Dorsolateral prefrontal cortex (tissue), 120 donors: ENCODE measurements at regions of chr19 and their contacts with region 1.

Region 1: GRCh38 chr19:12722566-12723380 is 959 bp downstream of the TNPO2 start:
- DNase-seq: peak; percentile 93 to 99 (median 98)
- H3K4me3 ChIP-seq: peak overlapping the region; percentile 52 to 83 (median 71)
- H3K27ac ChIP-seq: peak overlapping the region; percentile 16 to 96 (median 88)
- H3K27me3 ChIP-seq: no peaks in the 10 kb centered on the region
- CTCF ChIP-seq: peak in 21 of 56 donors; percentile 10 to 51 (median 18)

Region 2: DNA sequence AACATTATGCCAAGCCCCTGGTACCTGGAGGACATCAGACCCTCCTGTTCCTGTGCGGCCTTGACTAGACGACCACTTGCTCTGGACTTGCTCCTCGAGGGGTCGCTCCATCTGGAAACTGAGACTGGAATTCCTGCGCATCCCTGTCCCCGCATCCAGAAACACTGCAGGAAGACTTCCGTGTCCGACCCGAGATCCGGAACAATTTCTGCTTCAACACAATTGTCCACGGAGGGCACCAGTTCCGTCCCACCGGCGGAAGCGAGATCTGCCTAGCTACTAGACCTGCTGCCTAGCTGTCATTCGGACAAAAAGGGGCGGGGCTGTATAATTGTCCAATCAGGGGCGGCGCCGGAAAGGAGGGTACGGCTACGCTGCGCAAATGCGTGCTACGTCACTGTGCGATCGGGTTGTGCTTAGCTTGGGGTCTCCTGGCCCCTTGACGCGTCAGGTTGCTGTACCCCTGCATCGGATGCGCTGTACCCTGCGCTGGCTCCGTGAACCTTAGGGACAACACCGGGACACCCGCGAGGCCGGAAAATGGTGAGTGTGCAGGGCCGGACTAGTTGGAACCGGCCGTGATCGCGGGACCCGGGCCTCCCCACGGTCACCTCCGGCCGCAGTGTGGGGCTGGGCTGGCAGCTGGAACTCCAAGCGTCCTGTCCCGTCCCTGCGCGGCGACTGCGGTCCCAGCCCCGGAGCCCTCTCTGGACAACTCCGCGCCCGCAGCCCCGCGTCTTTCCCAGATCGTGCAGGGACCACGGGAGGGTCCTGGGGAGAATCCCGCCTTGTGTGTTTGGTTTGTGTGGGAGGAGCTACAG is 112.0 kb before region 1 on chr19 and contains the starts of genes ZNF490 and ZNF791:
- intact Hi-C with region 1: loop called in 1 of 2 experiments (anchors 5 kb)
- DNase-seq: peak; percentile 97 to 100 (median 99)
- H3K4me3 ChIP-seq: peak within 1 kb of the TSS; percentile 70 to 100 (median 96)
- H3K27ac ChIP-seq: peak within 1 kb of the TSS; percentile 39 to 98 (median 91)
- H3K27me3 ChIP-seq: no peaks in the 10 kb centered on the region
- CTCF ChIP-seq: peak in 40 of 56 donors; percentile 5 to 55 (median 29)
- total RNA-seq, gene ZNF490: 11.0 to 31.0 (median 19.9) TPM
- total RNA-seq, gene ZNF791: 21.1 to 51.1 (median 33.9) TPM

Region 3: GRCh38 chr19:12666265-12667048 is 56.3 kb before region 1 on chr19 and contains the starts of genes MAN2B1 and WDR83:
- intact Hi-C with region 1: no loop called
- DNase-seq: peak in 9 of 10 donors; percentile 48 to 83 (median 65)
- H3K4me3 ChIP-seq: peak within 1 kb of the TSS; percentile 66 to 100 (median 92)
- H3K27ac ChIP-seq: peak within 1 kb of the TSS in 54 of 59 donors; percentile 21 to 89 (median 74)
- H3K27me3 ChIP-seq: no peaks in the 10 kb centered on the region
- CTCF ChIP-seq: peak in 2 of 56 donors; percentile 12 to 13
- total RNA-seq, gene MAN2B1: 16.5 to 62.2 (median 32.8) TPM
- total RNA-seq, gene WDR83: 11.8 to 30.1 (median 19.5) TPM

Region 4: DNA sequence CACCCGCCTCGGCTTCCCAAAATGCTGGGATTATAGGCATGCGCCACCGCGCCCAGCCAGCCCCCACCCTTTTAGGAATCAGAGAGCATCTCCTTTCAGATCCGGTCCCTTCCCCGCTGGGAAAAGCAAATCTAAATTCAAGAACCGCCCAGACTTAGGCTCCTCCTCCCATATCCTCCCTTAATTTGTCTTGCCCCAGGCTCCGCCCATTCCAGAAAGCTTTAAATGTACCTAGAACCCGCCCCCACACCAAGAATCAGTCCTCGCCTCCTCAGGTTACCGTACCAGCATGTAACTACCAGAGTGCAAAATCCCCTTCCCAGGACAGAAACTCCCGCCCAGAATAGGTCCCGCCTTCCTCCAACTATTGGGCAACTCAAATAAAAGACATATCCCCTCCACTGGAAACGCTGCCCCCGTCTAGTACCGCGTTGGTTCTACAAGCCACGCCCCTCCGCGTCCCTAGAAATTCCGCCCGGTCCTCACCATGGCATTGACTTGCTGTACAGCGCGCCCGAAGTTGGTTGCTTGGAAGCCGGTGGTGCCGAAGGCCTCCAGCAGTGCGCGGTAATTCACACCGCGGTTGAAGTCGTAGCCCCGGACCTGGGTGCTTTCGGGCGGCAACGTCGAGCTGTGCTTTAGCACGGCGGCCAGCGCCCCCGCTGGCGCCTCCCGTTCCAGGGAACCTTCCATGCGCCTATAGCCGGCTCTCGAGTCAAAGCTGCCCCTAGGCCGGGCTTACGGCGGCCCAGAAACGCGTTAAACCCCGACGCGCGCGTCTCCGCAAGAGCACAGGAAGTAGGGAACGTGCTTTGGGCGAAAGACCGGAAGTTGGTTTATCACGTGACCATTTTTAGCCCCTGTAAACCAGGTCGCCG is 41.5 kb before region 1 on chr19 and contains the start of gene DHPS:
- intact Hi-C with region 1: loop called (anchors 1 to 5 kb)
- DNase-seq: peak; percentile 85 to 96 (median 91)
- H3K4me3 ChIP-seq: peak within 1 kb of the TSS; percentile 73 to 100 (median 95)
- H3K27ac ChIP-seq: peak within 1 kb of the TSS in 58 of 59 donors; percentile 56 to 99 (median 91)
- H3K27me3 ChIP-seq: no peaks in the 10 kb centered on the region
- CTCF ChIP-seq: peak in 32 of 56 donors; percentile 8 to 56 (median 24)
- total RNA-seq, gene DHPS: 79.8 to 142 (median 103) TPM

Region 5: DNA sequence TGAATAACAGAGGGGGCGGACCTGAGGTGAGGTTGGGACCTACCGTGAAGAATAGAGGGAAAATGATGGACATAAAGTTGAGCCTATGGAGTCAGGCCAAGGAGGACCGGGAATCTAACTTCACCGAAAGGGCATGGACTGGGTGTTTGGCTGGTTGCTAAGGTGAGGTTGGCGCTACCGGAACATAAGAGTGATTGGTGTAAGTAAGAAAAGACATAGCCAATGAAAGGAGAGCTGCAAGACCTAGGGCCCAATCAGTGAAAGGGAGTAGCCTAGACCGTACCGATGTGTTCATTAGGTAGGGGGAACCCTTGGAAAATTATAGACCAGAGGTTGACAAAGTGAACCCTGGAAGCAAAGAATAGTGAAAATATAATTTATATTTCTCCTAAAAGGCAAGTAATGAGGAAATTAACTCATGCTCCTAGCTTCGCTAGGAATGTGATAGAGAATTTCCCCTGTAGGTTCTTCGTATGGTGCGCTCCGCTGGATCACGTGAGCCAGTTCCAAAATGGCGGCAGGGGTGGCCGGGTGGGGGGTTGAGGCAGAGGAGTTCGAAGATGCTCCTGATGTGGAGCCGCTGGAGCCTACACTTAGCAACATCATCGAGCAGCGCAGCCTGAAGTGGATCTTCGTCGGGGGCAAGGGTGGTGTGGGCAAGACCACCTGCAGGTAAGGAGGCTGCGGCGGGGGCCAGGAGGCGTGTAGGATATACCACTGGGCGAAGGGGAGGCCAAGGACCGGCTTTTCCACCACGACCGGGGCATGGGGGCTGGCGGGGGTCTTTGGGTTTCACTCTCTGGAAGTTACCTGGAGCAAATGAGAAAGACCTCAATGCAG is 14.4 kb after region 1 on chr19 and contains the start of gene GET3:
- intact Hi-C with region 1: loop called (anchors 1 kb)
- DNase-seq: peak; percentile 75 to 97 (median 92)
- H3K4me3 ChIP-seq: peak within 1 kb of the TSS; percentile 60 to 99 (median 88)
- H3K27ac ChIP-seq: peak within 1 kb of the TSS; percentile 85 to 100 (median 99)
- H3K27me3 ChIP-seq: no peaks in the 10 kb centered on the region
- CTCF ChIP-seq: peak in 14 of 56 donors; percentile 3 to 38 (median 12)
- total RNA-seq, gene GET3: 44.1 to 94.0 (median 65.5) TPM

Region 6: GRCh38 chr19:12789904-12790619 is 67.3 kb after region 1 on chr19:
- intact Hi-C with region 1: loop called in 1 of 2 experiments (anchors 5 kb)
- DNase-seq: peak; percentile 91 to 99 (median 96)
- H3K4me3 ChIP-seq: peak overlapping the region; percentile 53 to 98 (median 89)
- H3K27ac ChIP-seq: peak overlapping the region; percentile 82 to 100 (median 98)
- H3K27me3 ChIP-seq: no peaks in the 10 kb centered on the region
- CTCF ChIP-seq: peak in 18 of 56 donors; percentile 7 to 35 (median 20)